Lower leg skin (tissue), 4 donors: ENCODE measurements at regions of chr20 and their contacts with region 1.

Region 1: DNA sequence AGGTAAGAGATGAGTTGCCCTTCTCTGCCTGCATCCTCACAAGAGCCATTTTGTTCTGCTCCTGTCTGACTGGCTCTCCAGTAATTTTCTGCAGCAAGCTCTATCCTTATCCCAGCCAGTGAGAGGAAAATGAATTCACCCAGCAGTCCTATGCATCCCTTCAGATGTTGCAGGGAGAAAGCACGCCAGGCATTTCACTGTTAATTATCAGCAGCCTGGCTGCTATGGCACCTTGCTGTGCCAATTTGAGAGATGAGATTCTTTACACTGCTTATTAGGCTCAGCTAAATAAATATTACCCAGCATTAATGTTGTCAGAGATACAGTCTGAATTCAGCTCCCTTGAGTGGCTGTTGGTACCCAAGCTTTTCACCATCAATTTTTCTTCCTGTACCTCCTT is 61.1 kb upstream of the SNAP25 start:
- DNase-seq: no peak
- H3K4me3 ChIP-seq: no peak overlapping the region
- CTCF ChIP-seq: no peak
- POLR2A ChIP-seq: no peak

Region 2: GRCh38 chr20:8271727-8272126 is 1885.8 kb before region 1 on chr20:
- intact Hi-C with region 1: loop called (anchors 5 kb)
- DNase-seq: no peak
- H3K4me3 ChIP-seq: no peak overlapping the region
- CTCF ChIP-seq: no peak
- POLR2A ChIP-seq: no peak

Region 3: DNA sequence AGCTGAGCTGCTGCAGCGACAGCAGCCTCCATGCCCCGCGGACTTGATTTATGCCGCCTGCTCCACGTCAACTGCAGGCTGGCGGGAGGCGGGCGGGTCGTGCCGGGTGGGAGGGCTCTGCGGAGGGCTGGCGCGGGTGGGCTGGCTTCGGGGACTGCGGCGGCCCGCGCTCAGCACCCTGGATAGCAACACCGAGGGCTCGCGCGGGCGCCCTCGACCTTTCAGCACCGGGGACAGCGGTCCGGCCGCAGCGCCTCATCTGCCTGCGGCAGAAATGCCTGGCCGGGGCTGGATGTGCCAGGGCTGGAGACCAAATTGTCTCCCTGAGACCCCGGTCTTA is 61.9 kb after region 1 on chr20:
- intact Hi-C with region 1: no loop called
- DNase-seq: peak; percentile 35 to 88
- H3K4me3 ChIP-seq: no peak overlapping the region
- CTCF ChIP-seq: no peak
- POLR2A ChIP-seq: no peak